SK-N-SH (cell line): ENCODE measurements at regions of chr15 and their contacts with region 1.

Region 1: DNA sequence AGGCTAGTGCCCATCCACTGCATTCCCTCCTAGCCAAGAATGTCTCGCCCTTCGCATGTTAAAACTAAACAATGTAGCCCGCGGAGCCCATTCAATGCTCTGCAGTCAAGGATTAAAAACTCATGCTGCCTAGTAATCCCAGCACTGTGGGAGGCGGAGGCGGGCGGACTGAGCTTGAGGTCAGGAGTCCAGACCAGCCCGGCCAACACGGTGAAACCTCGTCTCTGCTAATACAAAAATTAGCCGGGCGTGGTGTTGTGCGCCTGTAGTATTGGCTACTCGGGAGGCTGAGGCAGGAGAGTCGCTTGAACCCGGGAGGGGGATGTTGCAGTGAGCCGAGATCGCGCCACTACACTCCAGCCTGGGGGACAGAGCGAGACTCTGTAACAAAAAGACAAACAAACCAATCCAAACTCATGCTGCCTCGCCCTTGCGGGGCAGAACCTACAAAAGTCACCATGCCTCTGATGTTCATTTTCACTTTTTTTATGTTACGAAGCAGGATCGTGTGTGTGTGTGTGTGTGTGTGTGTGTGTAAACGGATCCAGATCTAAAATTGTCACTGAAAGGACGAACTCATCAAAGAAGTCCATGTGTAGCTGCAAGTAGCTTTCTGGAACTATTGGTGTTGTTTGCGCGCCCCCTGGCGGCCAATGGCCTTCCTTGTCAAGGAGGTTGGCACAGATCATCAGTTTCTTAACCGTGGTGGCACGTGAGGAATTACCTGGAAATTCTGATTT is 54.8 kb upstream of the SPESP1 start:
- DNase-seq: peak; percentile 78
- H3K4me3 ChIP-seq: peak overlapping the region in 1 of 2 experiments; percentile 52; a peak in 2 of 4 replicates
- H3K27ac ChIP-seq: no peak overlapping the region
- H3K4me1 ChIP-seq: no peaks in the 10 kb centered on the region
- H3K27me3 ChIP-seq: peaks cover 11% of the 10 kb centered on the region; the same call in 1 of the 2 replicates
- CTCF ChIP-seq: peak; percentile 93
- EP300 ChIP-seq: no peak
- RAD21 ChIP-seq: peak; percentile 97

Region 2: GRCh38 chr15:68550481-68551295 is 324.9 kb before region 1 on chr15:
- CTCF ChIA-PET with region 1: interaction called, 137 read pairs
- POLR2A ChIA-PET with region 1: no interaction called
- DNase-seq: peak; percentile 74
- H3K4me3 ChIP-seq: peak overlapping the region in 1 of 2 experiments; percentile 34; a peak in 1 of 4 replicates
- H3K27ac ChIP-seq: no peak overlapping the region
- H3K4me1 ChIP-seq: peaks cover 4 to 5% of the 10 kb centered on the region in 2 experiments; a peak in 3 of 4 replicates
- H3K27me3 ChIP-seq: no peaks in the 10 kb centered on the region
- CTCF ChIP-seq: peak; percentile 92
- EP300 ChIP-seq: no peak
- RAD21 ChIP-seq: peak; percentile 80

Region 3: GRCh38 chr15:68672781-68673205 is 202.8 kb before region 1 on chr15:
- CTCF ChIA-PET with region 1: interaction called, 40 read pairs
- POLR2A ChIA-PET with region 1: no interaction called
- DNase-seq: no peak
- H3K4me3 ChIP-seq: no peak overlapping the region
- H3K27ac ChIP-seq: no peak overlapping the region
- H3K4me1 ChIP-seq: no peaks in the 10 kb centered on the region; a peak in 1 of 4 replicates
- H3K27me3 ChIP-seq: no peaks in the 10 kb centered on the region
- CTCF ChIP-seq: peak; percentile 23; the same call in 1 of the 2 replicates
- EP300 ChIP-seq: no peak
- RAD21 ChIP-seq: peak; percentile 60

Region 4: GRCh38 chr15:68739390-68740080 is 136.0 kb before region 1 on chr15:
- CTCF ChIA-PET with region 1: interaction called, 15 read pairs
- POLR2A ChIA-PET with region 1: no interaction called
- DNase-seq: no peak
- H3K4me3 ChIP-seq: no peak overlapping the region
- H3K27ac ChIP-seq: no peak overlapping the region
- H3K4me1 ChIP-seq: no peaks in the 10 kb centered on the region
- H3K27me3 ChIP-seq: no peaks in the 10 kb centered on the region
- CTCF ChIP-seq: no peak
- EP300 ChIP-seq: no peak
- RAD21 ChIP-seq: no peak

Region 5: GRCh38 chr15:68806220-68807060 is 69.1 kb before region 1 on chr15:
- CTCF ChIA-PET with region 1: interaction called, 10 read pairs
- POLR2A ChIA-PET with region 1: no interaction called
- DNase-seq: peak; percentile 43
- H3K4me3 ChIP-seq: no peak overlapping the region
- H3K27ac ChIP-seq: peak overlapping the region in 1 of 2 experiments; percentile 54; a peak in 1 of 4 replicates
- H3K4me1 ChIP-seq: peaks cover 0 to 52% of the 10 kb centered on the region in 2 experiments; a peak in 1 of 4 replicates
- H3K27me3 ChIP-seq: no peaks in the 10 kb centered on the region
- CTCF ChIP-seq: no peak
- EP300 ChIP-seq: no peak
- RAD21 ChIP-seq: 0 out of 2 replicates have a peak, but pooled peaks have one; percentile 1

Region 6: DNA sequence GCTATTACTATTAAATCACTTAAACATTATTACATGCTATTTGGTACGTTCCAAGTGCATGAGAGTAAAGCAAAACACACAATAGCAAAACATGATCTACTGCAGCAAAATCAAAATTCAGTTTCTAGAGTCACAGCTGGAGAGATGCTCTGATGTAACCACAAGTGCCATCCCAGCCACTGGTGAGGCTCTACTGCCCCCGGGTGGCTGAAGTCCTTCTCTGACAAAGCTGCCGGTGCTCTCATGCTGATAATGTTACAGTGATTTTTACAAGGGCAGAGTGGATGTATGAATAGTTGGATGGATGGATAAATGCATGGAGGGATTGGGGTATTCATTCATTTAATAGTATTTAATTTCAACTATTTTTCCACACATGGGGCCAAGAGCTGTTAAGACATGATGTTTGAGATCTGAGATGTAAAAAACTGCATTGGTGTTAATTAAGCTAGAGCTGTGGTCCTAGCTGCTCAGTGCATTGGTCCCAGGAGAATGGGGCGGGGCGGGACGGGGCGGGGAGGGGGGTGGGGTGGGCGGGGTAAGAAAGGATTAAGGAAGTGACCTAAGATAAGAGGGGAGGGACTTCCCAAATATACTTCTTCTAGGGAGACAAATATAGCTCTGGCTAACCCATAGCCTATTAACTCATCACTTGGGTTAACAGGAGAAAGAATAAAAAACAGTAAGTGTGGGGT is 49.5 kb after region 1 on chr15:
- CTCF ChIA-PET with region 1: interaction called, 22 read pairs
- POLR2A ChIA-PET with region 1: no interaction called
- DNase-seq: peak; percentile 86
- H3K4me3 ChIP-seq: peak overlapping the region in 1 of 2 experiments; percentile 24; a peak in 1 of 4 replicates
- H3K27ac ChIP-seq: no peak overlapping the region
- H3K4me1 ChIP-seq: peaks cover 0 to 2% of the 10 kb centered on the region in 2 experiments; a peak in 1 of 4 replicates
- H3K27me3 ChIP-seq: peaks cover 9% of the 10 kb centered on the region; the same call in 1 of the 2 replicates
- CTCF ChIP-seq: peak; percentile 91
- EP300 ChIP-seq: no peak
- RAD21 ChIP-seq: peak; percentile 98